HEK293T (cell line): ENCODE measurements at regions of chr16 and their contacts with region 1.

Region 1: DNA sequence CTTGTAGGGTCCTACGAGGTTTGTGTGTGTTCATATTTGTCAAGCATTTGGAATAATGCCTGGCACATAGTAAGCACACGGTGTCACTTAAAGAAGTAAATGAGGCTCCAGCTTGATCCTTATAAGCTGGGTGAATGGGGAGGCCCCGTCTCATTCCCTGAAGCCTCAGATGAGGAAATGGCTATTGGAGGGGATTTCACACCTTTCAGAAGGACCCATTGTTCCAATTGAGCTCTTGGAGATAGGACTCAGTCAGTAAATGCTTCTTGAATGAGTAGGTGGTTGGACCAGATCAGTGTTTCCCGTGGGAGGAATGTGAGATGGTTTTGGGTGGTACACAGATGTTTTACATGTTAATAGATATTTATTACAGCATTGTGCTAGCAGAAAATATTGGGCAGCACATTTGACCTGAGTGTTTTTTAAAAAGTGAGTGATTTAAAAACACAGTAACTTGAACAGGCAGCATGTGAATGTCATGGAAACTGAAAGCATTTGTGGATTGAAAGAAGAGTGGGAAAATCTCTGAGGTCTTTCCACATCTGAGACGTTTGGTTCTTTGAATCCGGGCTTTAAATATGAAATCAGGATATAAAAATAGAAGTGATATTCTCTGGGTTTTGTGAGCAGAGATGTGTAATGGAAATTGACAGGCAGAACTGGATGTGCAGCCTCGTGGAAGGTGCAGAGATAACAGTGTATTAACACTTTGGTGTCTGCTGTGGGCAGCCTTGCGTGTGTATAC is 36.4 kb upstream of the ARHGAP17 start:
- DNase-seq: no peak

Region 2: GRCh38 chr16:25014500-25015147 is 37.0 kb before region 1 on chr16:
- CTCF ChIA-PET with region 1: interaction called, 3 read pairs
- POLR2A ChIA-PET with region 1: interaction called, 11 read pairs
- DNase-seq: peak; percentile 46

Region 3: DNA sequence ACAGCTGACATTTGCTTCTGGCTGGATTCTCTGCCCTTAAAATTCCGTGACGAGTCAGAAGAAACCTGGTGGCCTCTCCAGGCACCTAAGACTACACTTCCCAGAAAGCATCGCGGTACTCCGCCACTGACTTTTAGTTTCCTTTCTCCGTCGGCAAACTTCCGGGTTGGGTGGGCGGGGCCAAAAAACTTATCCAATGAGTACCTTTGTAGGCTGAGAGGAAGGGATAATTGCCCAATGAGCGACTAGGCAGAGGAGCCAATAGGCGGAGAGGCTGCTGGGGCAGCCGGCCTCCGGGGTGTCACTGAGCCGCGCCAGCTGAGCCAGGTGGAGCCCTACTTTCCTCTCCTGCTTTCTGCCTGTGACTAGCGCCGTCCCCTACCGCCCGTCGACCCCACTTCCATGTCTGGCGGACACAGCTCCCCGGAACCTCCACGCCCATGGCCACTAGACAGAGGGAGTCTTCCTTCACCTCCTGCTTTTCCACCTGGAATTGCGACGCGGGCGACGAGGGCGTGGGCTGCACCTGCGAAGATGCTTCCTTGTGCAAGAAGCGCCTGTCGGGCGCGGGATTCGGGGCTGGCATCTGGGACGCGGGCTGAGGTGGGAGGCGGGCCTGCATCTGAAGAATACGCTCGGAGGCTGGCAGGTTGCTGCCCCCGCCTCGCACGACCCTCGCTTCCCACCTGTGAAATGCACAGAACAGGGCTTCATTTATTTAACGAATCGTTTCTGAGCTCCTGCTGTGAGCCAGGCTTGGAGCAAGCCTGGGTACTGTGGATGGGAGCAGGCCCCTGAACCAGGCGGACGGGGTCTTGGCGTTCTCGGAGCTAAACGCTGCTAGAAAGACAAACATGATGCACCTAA is 19.9 kb before region 1 on chr16:
- CTCF ChIA-PET with region 1: no interaction called
- POLR2A ChIA-PET with region 1: interaction called, 13 read pairs
- DNase-seq: peak; percentile 93

Region 4: GRCh38 chr16:25106567-25107465 is 55.2 kb after region 1 on chr16:
- CTCF ChIA-PET with region 1: no interaction called
- POLR2A ChIA-PET with region 1: interaction called, 19 read pairs
- DNase-seq: peak; percentile 89